CD4-positive, alpha-beta memory T cell (primary cell): ENCODE measurements at regions of chr1 and their contacts with region 1.

Region 1: GRCh38 chr1:232211149-232211548 is 418.8 kb downstream of the SIPA1L2 start:
- DNase-seq: no peak
- H3K4me3 ChIP-seq: no peak overlapping the region
- H3K4me3 Mint-ChIP-seq: no peak overlapping the region
- H3K27ac ChIP-seq: no peak overlapping the region
- H3K27ac Mint-ChIP-seq: no peak overlapping the region
- H3K4me1 ChIP-seq: no peaks in the 10 kb centered on the region
- H3K4me1 Mint-ChIP-seq: no peaks in the 10 kb centered on the region
- H3K27me3 ChIP-seq: no peaks in the 10 kb centered on the region
- H3K27me3 Mint-ChIP-seq: peaks cover 2 to 3% of the 10 kb centered on the region in 2 donors

Region 2: GRCh38 chr1:232226197-232226712 is 15.1 kb after region 1 on chr1:
- CTCF ChIA-PET with region 1: interaction called, 11 read pairs
- POLR2A ChIA-PET with region 1: no interaction called
- intact Hi-C with region 1: no loop called
- DNase-seq: peak; percentile 24 to 49 (median 41)
- H3K4me3 ChIP-seq: no peak overlapping the region
- H3K4me3 Mint-ChIP-seq: peak overlapping the region; percentile 45 to 81 (median 64)
- H3K27ac ChIP-seq: no peak overlapping the region
- H3K27ac Mint-ChIP-seq: peak overlapping the region; percentile 26 to 95 (median 59)
- H3K4me1 ChIP-seq: peaks cover 30% of the 10 kb centered on the region
- H3K4me1 Mint-ChIP-seq: peaks cover 21 to 26% (median 25%) of the 10 kb centered on the region in 4 donors
- H3K27me3 ChIP-seq: no peaks in the 10 kb centered on the region
- H3K27me3 Mint-ChIP-seq: no peaks in the 10 kb centered on the region